ENCODE measurements at regions of chr9 and their contacts with region 1.

Region 1: GRCh38 chr9:84170521-84171141 is 169.9 kb downstream of the SLC28A3 start:
- DNase-seq: peak; percentile 33
- H3K4me3 ChIP-seq: no peak overlapping the region
- H3K27ac ChIP-seq: no peak overlapping the region
- H3K4me1 ChIP-seq: peaks cover 11% of the 10 kb centered on the region
- H3K27me3 ChIP-seq: peaks cover 0 to 1% of the 10 kb centered on the region in 2 experiments
- CTCF ChIP-seq: no peak
- POLR2A ChIP-seq: no peak

Region 2: GRCh38 chr9:83937911-83938323 is 232.7 kb before region 1 on chr9:
- CTCF ChIA-PET with region 1: interaction called, 9 read pairs
- POLR2A ChIA-PET with region 1: no interaction called
- dilution Hi-C with region 1: no loop called
- intact Hi-C with region 1: loop called (anchors 1 kb)
- DNase-seq: peak; percentile 70
- H3K4me3 ChIP-seq: no peak overlapping the region
- H3K27ac ChIP-seq: no peak overlapping the region
- H3K4me1 ChIP-seq: peaks cover 7% of the 10 kb centered on the region
- H3K27me3 ChIP-seq: no peaks in the 10 kb centered on the region
- CTCF ChIP-seq: peak; percentile 48 to 49
- POLR2A ChIP-seq: no peak

Region 3: DNA sequence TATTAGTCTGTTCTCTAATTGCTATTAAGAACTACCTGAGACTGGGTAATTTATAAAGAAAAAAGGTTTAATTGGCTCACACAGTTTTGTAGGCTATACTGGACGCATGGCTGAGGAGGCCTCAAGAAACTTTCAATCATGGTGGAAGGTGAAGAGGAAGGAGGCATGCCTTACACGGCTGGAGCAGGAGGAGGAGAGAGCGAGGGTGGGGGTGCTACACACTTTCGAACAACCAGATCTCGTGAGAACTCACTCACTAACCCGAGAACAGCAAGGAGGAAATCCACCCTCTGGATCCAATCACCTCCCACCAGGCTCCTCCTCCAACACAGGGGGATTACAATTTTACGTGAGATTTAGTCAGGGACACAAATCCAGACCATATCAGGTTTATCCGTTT is 100.0 kb before region 1 on chr9:
- CTCF ChIA-PET with region 1: interaction called, 8 read pairs
- POLR2A ChIA-PET with region 1: no interaction called
- dilution Hi-C with region 1: no loop called
- intact Hi-C with region 1: loop called (anchors 10 kb)
- DNase-seq: no peak
- H3K4me3 ChIP-seq: no peak overlapping the region
- H3K27ac ChIP-seq: no peak overlapping the region
- H3K4me1 ChIP-seq: no peaks in the 10 kb centered on the region
- H3K27me3 ChIP-seq: no peaks in the 10 kb centered on the region
- CTCF ChIP-seq: no peak
- POLR2A ChIP-seq: no peak

Region 4: DNA sequence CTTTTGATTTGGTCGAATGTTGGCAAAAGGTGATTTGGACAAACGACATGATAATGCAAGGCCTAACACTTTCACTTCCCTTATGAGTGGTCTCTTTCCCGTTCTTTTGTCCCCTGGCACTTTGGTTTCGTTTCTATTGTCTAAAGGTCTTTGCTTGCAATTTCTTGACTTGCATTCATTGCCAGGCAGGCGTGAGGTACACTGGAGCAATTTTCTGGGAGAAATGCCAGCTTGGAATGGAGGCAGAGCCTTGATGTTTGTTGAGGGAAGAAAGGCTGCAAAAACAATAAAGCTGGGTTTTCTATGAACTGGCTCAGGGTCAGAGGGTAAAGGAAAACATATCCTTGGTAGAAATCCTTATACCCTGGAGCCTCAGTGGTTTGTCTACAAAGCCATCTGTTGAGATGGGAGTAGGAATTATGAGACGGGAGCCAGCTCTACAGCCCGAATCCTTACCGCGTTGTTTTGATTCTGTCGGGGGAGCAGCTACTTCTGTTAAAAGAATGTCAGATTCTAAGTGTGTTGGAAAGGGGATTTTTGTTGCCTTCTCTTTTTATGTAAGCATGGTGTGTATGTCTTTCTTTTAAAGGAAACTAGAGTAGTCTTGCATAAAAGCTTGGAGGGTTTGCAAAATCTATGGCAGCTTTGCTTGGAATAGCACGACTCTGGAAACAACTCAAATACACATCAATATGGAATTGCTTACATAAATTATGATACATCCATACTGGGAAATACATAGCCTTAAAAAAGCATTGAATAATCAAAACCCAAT is 31.1 kb before region 1 on chr9:
- CTCF ChIA-PET with region 1: interaction called, 22 read pairs
- POLR2A ChIA-PET with region 1: interaction called, 4 read pairs
- dilution Hi-C with region 1: no loop called
- intact Hi-C with region 1: loop called (anchors 5 kb)
- DNase-seq: peak; percentile 98
- H3K4me3 ChIP-seq: peak overlapping the region in 1 of 3 experiments; percentile 39
- H3K27ac ChIP-seq: peak overlapping the region; percentile 59
- H3K4me1 ChIP-seq: peaks cover 19% of the 10 kb centered on the region
- H3K27me3 ChIP-seq: no peaks in the 10 kb centered on the region
- CTCF ChIP-seq: no peak
- POLR2A ChIP-seq: no peak

Region 5: DNA sequence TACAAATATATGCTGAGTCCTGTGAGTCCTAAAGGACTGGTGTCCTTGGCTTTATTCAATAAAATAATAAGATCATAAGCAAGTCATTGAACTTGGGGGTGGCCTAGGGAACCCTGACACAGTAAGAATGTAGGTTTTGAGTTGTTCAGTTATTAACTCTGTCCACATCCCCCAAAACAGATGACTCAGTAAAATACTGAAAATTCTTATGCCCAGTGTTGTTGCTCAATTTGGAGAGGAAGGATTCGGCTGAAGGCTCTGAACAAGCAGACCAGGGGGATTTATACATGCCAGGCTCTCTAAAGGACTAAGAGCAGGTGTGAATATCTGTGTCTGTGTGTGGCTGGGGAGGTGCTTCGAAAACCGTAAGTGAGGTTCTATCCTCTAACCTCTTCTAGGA is 16.3 kb before region 1 on chr9:
- CTCF ChIA-PET with region 1: interaction called, 30 read pairs
- POLR2A ChIA-PET with region 1: no interaction called
- dilution Hi-C with region 1: no loop called
- intact Hi-C with region 1: no loop called
- DNase-seq: no peak
- H3K4me3 ChIP-seq: no peak overlapping the region
- H3K27ac ChIP-seq: no peak overlapping the region
- H3K4me1 ChIP-seq: peaks cover 22% of the 10 kb centered on the region
- H3K27me3 ChIP-seq: no peaks in the 10 kb centered on the region
- CTCF ChIP-seq: no peak
- POLR2A ChIP-seq: no peak

Region 6: DNA sequence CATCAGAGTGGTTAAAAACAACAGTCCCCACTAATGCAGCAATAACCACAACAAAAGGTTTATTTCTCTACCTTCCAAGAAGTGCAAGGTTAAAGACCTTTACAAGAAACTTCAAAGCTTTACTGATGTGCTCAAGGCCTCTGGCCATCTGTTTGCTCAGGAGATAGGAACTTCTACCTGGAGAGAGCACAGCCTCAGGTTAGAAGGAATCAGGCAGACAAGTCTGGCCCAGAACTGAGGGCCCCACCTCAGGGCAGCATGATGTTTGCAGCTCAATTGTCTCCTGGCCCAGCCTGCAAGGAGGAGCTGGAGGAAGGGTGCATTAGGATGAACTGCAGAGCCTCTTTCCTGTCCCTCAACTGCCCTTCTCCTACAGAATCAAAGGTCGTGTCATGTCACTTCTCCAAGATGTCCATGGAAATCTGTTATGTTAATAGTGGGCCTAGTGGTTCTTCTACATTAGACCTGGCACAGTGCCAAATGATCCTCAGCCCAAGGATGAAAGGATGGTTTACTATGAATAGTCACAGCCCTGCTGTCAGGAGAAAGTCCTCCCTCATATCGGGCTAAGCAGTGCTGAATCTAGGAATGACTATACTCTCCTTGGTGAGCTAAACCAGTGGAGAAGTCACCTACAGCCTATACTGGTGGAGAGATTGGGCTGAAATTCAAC is 400.0 kb after region 1 on chr9:
- CTCF ChIA-PET with region 1: no interaction called
- POLR2A ChIA-PET with region 1: no interaction called
- dilution Hi-C with region 1: no loop called
- intact Hi-C with region 1: no loop called
- DNase-seq: no peak
- H3K4me3 ChIP-seq: no peak overlapping the region
- H3K27ac ChIP-seq: no peak overlapping the region
- H3K4me1 ChIP-seq: no peaks in the 10 kb centered on the region
- H3K27me3 ChIP-seq: no peaks in the 10 kb centered on the region
- CTCF ChIP-seq: no peak
- POLR2A ChIP-seq: no peak